MCF 10A (cell line): ENCODE measurements at regions of chr2 and their contacts with region 1.

Region 1: DNA sequence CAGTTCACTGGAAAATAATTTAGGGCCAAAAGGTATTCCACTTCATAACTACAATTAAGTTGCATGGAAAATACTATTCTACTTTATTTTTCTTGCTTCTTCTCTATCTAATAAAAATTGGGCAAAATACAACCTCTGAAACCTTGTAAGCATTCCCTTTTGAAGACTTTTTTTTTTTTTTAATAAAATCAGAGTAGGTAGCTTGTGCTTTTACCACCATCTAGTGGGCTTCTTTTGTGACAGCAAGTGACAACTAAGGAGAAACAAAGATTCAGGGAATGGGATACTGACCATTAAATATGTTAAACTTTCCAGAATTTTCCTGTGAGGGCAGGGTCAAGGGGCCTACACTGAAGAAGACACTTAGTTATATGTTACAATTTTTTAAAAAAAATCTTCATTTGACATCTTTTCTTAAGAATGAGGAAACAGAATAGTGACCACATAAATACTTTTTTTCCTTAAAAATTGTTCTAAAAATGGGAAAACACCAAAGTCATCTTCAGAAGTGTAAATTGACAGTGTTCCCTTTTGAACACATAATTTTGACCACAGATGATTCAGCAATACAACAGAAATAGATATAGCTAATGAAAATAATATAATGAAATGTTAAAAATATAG is 1183.2 kb upstream of the ACVR2A start:
- DNase-seq: peak; percentile 54
- H3K4me3 Mint-ChIP-seq: no peak overlapping the region
- H3K27ac Mint-ChIP-seq: no peak overlapping the region
- H3K4me1 Mint-ChIP-seq: peaks cover 14% of the 10 kb centered on the region
- H3K27me3 Mint-ChIP-seq: no peaks in the 10 kb centered on the region
- CTCF ChIP-seq: peak; percentile 66

Region 2: DNA sequence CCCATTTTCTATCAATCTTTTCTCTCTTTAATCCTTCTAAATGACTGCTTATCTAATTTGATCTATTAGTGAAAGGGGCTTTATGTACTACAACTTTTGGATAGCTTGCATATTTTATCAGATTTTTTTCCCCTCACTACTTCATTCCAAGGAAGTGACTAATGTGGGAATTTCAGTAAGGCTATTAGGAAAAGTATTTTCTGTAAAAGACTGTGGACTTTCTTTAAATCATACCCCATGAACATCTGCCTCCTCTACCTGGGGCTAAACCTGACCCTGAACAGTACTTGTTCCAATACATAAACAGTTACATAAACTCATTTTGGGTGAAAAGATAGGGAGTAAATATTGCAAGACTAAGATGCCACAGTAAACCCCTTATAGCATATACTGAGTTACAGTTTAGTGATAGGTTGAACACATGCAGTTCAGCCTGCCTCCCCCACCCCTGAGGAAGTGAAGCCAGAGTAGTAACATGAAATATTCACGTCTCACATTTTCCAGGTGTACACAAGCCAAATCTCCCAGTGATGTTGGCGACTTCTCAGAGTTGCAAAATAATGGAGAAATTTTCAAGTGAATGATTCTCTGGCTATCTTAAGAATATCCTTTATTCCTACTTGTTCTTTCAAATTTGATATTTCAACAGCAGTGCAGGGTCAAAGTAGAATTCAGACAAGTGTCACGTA is 1550.8 kb before region 1 on chr2:
- CTCF ChIA-PET with region 1: no interaction called
- POLR2A ChIA-PET with region 1: no interaction called
- intact Hi-C with region 1: loop called (anchors 5 kb)
- DNase-seq: no peak
- H3K4me3 Mint-ChIP-seq: no peak overlapping the region
- H3K27ac Mint-ChIP-seq: no peak overlapping the region
- H3K4me1 Mint-ChIP-seq: peaks cover 24% of the 10 kb centered on the region
- H3K27me3 Mint-ChIP-seq: no peaks in the 10 kb centered on the region
- CTCF ChIP-seq: no peak

Region 3: GRCh38 chr2:146312899-146313298 is 348.7 kb before region 1 on chr2:
- CTCF ChIA-PET with region 1: interaction called, 3 read pairs
- POLR2A ChIA-PET with region 1: no interaction called
- intact Hi-C with region 1: loop called (anchors 5 kb)
- DNase-seq: peak; percentile 26
- H3K4me3 Mint-ChIP-seq: no peak overlapping the region
- H3K27ac Mint-ChIP-seq: peak overlapping the region; percentile 22
- H3K4me1 Mint-ChIP-seq: peaks cover 5% of the 10 kb centered on the region
- H3K27me3 Mint-ChIP-seq: no peaks in the 10 kb centered on the region
- CTCF ChIP-seq: peak; percentile 27

Region 4: GRCh38 chr2:146523196-146523595 is 138.4 kb before region 1 on chr2:
- CTCF ChIA-PET with region 1: interaction called, 4 read pairs
- POLR2A ChIA-PET with region 1: no interaction called
- intact Hi-C with region 1: loop called (anchors 2 kb)
- DNase-seq: peak; percentile 3
- H3K4me3 Mint-ChIP-seq: no peak overlapping the region
- H3K27ac Mint-ChIP-seq: no peak overlapping the region
- H3K4me1 Mint-ChIP-seq: no peaks in the 10 kb centered on the region
- H3K27me3 Mint-ChIP-seq: no peaks in the 10 kb centered on the region
- CTCF ChIP-seq: peak; percentile 44

Region 5: DNA sequence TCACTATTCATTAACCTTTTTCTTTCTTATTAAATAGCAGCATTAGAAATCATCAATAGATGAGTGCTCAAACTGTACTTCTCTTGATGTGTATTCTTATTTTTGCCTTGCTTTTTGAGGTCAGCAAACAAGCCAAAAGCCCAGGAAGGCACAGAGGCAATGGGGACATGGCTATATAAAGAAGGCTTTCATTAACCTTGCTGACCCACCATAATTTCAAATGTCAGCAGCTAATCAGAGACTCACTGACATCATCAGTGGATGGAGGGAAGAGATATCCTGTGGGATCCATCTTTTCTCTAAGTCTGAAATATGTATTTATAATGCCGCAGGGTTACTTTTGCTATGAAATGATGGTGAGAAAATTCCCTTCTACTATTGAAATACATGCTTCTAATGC is 20.4 kb after region 1 on chr2:
- CTCF ChIA-PET with region 1: no interaction called
- POLR2A ChIA-PET with region 1: no interaction called
- intact Hi-C with region 1: no loop called
- DNase-seq: no peak
- H3K4me3 Mint-ChIP-seq: no peak overlapping the region
- H3K27ac Mint-ChIP-seq: no peak overlapping the region
- H3K4me1 Mint-ChIP-seq: no peaks in the 10 kb centered on the region
- H3K27me3 Mint-ChIP-seq: no peaks in the 10 kb centered on the region
- CTCF ChIP-seq: no peak